Right lobe of liver (tissue), 6 donors: ENCODE measurements at regions of chr1 and their contacts with region 1.

Region 1: DNA sequence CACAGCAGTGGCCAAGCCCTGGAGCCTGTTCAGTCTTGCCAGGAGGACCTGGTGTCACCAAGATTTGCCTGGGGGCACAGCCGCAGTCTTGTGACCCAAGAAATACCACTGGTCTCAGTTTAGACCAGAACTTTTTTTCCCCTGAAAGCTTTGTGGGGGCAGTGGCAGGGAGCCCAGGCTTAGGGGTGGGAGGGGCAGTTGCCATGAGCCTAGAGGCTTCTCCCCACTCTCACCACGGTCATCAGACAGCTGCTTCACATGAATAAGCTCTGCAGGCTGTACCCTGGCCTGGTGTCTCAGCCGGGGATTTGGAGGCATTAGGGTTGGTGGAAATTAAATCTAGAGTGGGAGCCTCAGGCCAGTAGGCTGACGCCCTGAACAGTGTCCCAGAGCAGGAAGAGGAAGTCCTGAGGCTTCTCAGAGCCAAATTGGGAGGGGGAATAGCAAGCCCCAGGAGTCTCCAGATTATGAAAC is 73.7 kb downstream of the SLC16A1 start:
- DNase-seq: no peak
- ATAC-seq: peak; percentile 16 to 53 (median 24)
- H3K4me3 ChIP-seq: no peak overlapping the region
- H3K27ac ChIP-seq: peak overlapping the region in 1 of 3 donors; percentile 8
- H3K4me1 ChIP-seq: no peaks in the 10 kb centered on the region
- H3K27me3 ChIP-seq: no peaks in the 10 kb centered on the region
- CTCF ChIP-seq: no peak
- POLR2A ChIP-seq: no peak

Region 2: GRCh38 chr1:112794654-112795239 is 87.6 kb before region 1 on chr1:
- intact Hi-C with region 1: no loop called
- DNase-seq: no peak
- ATAC-seq: peak in 1 of 4 donors; percentile 15
- H3K4me3 ChIP-seq: no peak overlapping the region
- H3K27ac ChIP-seq: no peak overlapping the region
- H3K4me1 ChIP-seq: no peaks in the 10 kb centered on the region
- H3K27me3 ChIP-seq: no peaks in the 10 kb centered on the region
- CTCF ChIP-seq: no peak
- POLR2A ChIP-seq: no peak

Region 3: GRCh38 chr1:112955781-112956543 is 73.7 kb after region 1 on chr1 and contains the start of gene SLC16A1:
- intact Hi-C with region 1: loop called in 1 of 2 experiments (anchors 10 kb)
- DNase-seq: peak; percentile 95 to 96 (median 96)
- ATAC-seq: peak; percentile 90 to 96 (median 93)
- H3K4me3 ChIP-seq: peak within 1 kb of the TSS; percentile 73 to 86 (median 86)
- H3K27ac ChIP-seq: peak within 1 kb of the TSS; percentile 82 to 91 (median 87)
- H3K4me1 ChIP-seq: peaks cover 0 to 15% (median 0%) of the 10 kb centered on the region in 4 donors
- H3K27me3 ChIP-seq: no peaks in the 10 kb centered on the region
- CTCF ChIP-seq: peak; percentile 27 to 39 (median 30)
- POLR2A ChIP-seq: peak; percentile 99
- total RNA-seq, gene SLC16A1: 26.1 to 81.9 (median 55.2) TPM

Region 4: GRCh38 chr1:112971006-112971405 is 88.7 kb after region 1 on chr1:
- intact Hi-C with region 1: no loop called
- DNase-seq: no peak
- ATAC-seq: no peak
- H3K4me3 ChIP-seq: no peak overlapping the region
- H3K27ac ChIP-seq: no peak overlapping the region
- H3K4me1 ChIP-seq: no peaks in the 10 kb centered on the region
- H3K27me3 ChIP-seq: no peaks in the 10 kb centered on the region
- CTCF ChIP-seq: no peak
- POLR2A ChIP-seq: no peak

Region 5: DNA sequence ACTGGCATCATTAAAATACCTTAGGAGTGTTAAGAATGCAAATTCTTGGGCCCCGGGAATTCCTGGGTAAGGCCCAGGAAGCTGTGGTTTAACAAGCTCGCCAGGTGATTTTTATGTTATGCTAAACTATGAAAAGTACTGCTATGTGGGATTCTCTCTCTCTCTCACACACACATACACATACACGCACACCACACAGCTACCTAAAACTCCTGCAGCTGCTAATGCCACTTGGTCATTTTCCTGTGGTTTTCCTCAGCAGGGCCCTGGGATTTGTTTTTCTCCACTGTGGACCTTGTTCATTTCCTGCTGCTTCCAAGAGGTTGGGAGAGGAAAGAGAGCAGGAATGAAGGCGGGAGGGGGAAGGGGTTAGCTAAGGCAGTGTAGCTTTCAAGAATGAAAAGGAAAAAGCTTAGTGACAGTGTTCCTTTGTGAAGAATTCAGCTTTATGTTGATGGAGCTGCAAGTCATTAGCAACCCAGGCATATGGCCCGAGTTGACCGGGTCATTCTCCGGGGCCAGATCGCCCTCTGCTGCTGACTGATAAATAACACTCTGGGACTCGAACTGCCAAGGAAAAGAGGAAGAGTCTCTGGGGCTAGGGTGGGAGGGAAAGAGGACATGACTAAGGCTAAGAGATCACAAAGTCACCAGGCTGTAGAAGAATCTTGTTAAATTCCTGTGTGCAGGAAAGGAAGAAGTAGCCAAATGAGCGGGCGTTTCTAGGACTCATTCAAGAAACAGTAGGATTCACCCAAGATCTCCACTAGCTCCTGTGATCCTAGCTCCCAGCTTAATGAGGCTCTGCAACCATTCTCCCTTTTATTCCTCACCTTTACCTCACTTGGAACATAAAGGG is 160.2 kb after region 1 on chr1:
- intact Hi-C with region 1: loop called (anchors 5 to 10 kb)
- DNase-seq: peak; percentile 71 to 77 (median 71)
- ATAC-seq: peak; percentile 97 to 98 (median 98)
- H3K4me3 ChIP-seq: no peak overlapping the region
- H3K27ac ChIP-seq: no peak overlapping the region
- H3K4me1 ChIP-seq: peaks cover 0 to 6% (median 2%) of the 10 kb centered on the region in 4 donors
- H3K27me3 ChIP-seq: no peaks in the 10 kb centered on the region
- CTCF ChIP-seq: peak; percentile 54 to 68 (median 66)
- POLR2A ChIP-seq: no peak

Region 6: DNA sequence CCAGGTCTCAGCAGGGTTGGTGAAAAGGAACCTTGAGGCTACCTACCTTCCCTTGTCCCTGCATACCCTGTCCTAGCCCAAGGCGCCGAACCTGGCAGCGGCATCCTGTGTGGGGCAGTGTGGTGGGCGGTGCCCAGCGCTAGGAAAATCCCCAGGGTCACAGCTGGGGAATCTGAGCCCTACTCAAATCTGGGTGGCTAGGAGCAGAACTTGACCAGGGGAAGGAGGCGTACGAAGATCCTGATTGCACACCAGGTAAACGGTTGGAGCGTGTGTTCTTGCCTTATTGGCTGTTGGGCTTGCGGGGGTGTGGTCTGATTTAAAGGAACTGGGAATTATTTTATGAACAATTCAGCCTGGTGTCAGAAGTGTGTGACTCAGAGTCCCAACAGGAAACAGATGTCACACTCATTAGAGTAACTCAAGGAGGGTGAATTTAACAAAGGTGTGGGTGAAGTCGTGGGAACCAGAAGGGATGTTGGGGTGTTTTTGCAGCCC is 309.3 kb after region 1 on chr1:
- intact Hi-C with region 1: no loop called
- DNase-seq: no peak
- ATAC-seq: peak in 1 of 4 donors; percentile 17
- H3K4me3 ChIP-seq: no peak overlapping the region
- H3K27ac ChIP-seq: no peak overlapping the region
- H3K4me1 ChIP-seq: no peaks in the 10 kb centered on the region
- H3K27me3 ChIP-seq: no peaks in the 10 kb centered on the region
- CTCF ChIP-seq: no peak
- POLR2A ChIP-seq: no peak

Region 7: GRCh38 chr1:113340038-113340437 is 457.7 kb after region 1 on chr1:
- intact Hi-C with region 1: no loop called
- DNase-seq: no peak
- ATAC-seq: no peak
- H3K4me3 ChIP-seq: no peak overlapping the region
- H3K27ac ChIP-seq: no peak overlapping the region
- H3K4me1 ChIP-seq: no peaks in the 10 kb centered on the region
- H3K27me3 ChIP-seq: no peaks in the 10 kb centered on the region
- CTCF ChIP-seq: no peak
- POLR2A ChIP-seq: no peak